IMR-90 (cell line): ENCODE measurements at regions of chr20 and their contacts with region 1.

Region 1: GRCh38 chr20:51211191-51211590 is 188.3 kb upstream of the KCNG1 start:
- DNase-seq: no peak
- ATAC-seq: no peak
- H3K4me3 ChIP-seq: no peak overlapping the region
- H3K27ac ChIP-seq: no peak overlapping the region
- H3K4me1 ChIP-seq: no peaks in the 10 kb centered on the region; the same call in 1 of the 2 replicates
- H3K27me3 ChIP-seq: peaks cover 26% of the 10 kb centered on the region
- CTCF ChIP-seq: no peak
- POLR2A ChIP-seq: no peak
- RAD21 ChIP-seq: no peak

Region 2: DNA sequence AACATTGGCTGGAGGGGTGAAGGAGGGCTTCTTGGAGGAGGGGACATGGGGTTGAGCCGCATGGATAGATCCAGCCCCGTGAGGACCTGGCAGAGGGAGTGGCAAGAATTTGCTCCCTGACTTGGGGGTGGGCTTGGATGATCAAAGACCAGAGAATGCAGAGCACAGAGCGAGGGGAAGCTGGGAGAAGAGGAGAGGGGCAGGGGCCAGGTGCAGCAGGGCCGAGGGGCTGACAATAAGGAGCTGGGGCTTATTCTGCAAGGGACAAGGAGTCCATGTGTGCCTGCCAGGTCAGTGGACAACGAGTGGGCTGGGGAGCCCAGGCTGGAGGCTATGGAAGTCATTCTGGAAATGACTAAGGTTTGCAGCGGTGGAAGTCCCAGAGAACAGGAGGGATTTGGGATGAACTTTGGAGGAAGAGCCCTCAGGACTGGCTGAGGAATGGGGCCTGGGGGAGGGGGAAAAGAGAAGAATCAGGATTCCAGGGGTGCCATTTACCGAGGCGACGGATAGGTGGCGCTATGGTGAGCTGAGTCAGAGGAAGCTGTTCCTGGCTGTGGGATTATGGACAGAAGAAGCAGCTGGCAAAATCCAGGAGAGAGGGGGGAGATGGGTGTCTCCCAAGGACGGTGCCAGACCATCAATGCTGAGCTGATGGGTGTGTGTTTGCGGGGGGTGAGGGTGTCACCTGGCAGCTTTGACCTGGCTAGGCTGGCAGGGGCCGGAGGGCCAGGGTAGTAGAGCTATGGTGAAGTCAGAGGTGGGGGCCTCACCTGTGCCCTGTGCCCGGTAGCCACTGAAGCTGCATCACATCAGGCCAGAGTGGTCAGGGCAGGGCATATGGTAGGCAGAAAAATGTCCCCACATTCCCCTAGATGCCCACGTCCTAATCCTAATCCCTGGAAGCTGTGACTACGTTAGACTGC is 196.1 kb before region 1 on chr20:
- CTCF ChIA-PET with region 1: no interaction called
- POLR2A ChIA-PET with region 1: no interaction called
- dilution Hi-C with region 1: no loop called
- in situ Hi-C with region 1: no loop called
- intact Hi-C with region 1: loop called (anchors 10 kb)
- DNase-seq: peak; percentile 73
- ATAC-seq: peak; percentile 98
- H3K4me3 ChIP-seq: no peak overlapping the region
- H3K27ac ChIP-seq: no peak overlapping the region
- H3K4me1 ChIP-seq: peaks cover 3% of the 10 kb centered on the region
- H3K27me3 ChIP-seq: no peaks in the 10 kb centered on the region
- CTCF ChIP-seq: peak; percentile 91
- POLR2A ChIP-seq: no peak
- RAD21 ChIP-seq: peak; percentile 83

Region 3: GRCh38 chr20:51135926-51136715 is 75.1 kb before region 1 on chr20:
- CTCF ChIA-PET with region 1: no interaction called
- POLR2A ChIA-PET with region 1: no interaction called
- dilution Hi-C with region 1: no loop called
- in situ Hi-C with region 1: no loop called
- intact Hi-C with region 1: no loop called
- DNase-seq: no peak
- ATAC-seq: no peak
- H3K4me3 ChIP-seq: no peak overlapping the region
- H3K27ac ChIP-seq: no peak overlapping the region
- H3K4me1 ChIP-seq: no peaks in the 10 kb centered on the region
- H3K27me3 ChIP-seq: peaks cover 5% of the 10 kb centered on the region
- CTCF ChIP-seq: no peak
- POLR2A ChIP-seq: no peak
- RAD21 ChIP-seq: no peak

Region 4: GRCh38 chr20:51608061-51608460 is 396.9 kb after region 1 on chr20:
- CTCF ChIA-PET with region 1: no interaction called
- POLR2A ChIA-PET with region 1: no interaction called
- dilution Hi-C with region 1: no loop called
- in situ Hi-C with region 1: no loop called
- intact Hi-C with region 1: no loop called
- DNase-seq: no peak
- ATAC-seq: no peak
- H3K4me3 ChIP-seq: no peak overlapping the region
- H3K27ac ChIP-seq: no peak overlapping the region
- H3K4me1 ChIP-seq: no peaks in the 10 kb centered on the region; the same call in 1 of the 2 replicates
- H3K27me3 ChIP-seq: no peaks in the 10 kb centered on the region
- CTCF ChIP-seq: no peak
- POLR2A ChIP-seq: no peak
- RAD21 ChIP-seq: no peak